Right cardiac atrium (tissue), 5 donors: ENCODE measurements at regions of chr5 and their contacts with region 1.

Region 1: GRCh38 chr5:82165740-82166530 is 112.2 kb downstream of the RPS23 start:
- DNase-seq: peak; percentile 69 to 84 (median 73)
- ATAC-seq: peak; percentile 99 to 100
- H3K4me3 ChIP-seq: no peak overlapping the region
- H3K27ac ChIP-seq: no peak overlapping the region
- H3K4me1 ChIP-seq: peaks cover 3% of the 10 kb centered on the region
- H3K27me3 ChIP-seq: no peaks in the 10 kb centered on the region

Region 2: DNA sequence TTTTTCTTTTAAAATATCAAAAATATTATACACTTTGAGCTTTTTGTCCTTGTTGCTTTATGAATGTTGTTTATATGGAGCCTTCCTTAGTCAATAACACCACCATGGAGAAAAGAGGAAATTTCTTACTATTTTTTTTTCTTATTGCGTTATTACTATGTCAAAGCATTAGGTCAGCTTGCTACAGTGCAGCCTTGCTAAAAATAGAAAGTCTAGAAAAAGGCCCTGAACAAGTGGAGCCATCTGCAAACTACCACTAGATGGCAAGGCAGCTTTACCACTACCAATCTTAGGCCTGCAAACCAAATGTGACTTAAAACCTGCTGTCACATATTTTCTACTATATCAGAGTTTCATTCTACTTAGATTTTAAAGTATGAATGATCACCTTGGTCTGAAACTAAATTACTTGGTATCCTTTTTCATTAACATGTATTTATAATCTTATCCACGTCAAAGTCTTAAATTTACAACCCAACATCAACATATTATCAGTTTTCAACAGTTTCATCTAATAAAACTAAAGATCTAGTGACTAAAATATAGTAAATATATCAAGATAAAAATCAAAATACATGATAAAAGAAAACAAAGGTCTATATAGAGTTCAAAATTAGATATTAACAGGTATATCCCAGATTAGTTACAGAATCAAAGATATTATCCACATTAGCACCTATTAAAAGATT is 658.9 kb before region 1 on chr5:
- intact Hi-C with region 1: loop called in 2 of 4 experiments (anchors 5 to 10 kb)
- DNase-seq: peak in 2 of 3 donors; percentile 36 to 43
- ATAC-seq: peak; percentile 98
- H3K4me3 ChIP-seq: no peak overlapping the region
- H3K27ac ChIP-seq: no peak overlapping the region
- H3K4me1 ChIP-seq: no peaks in the 10 kb centered on the region
- H3K27me3 ChIP-seq: no peaks in the 10 kb centered on the region